Motor neuron (in vitro differentiated cells): ENCODE measurements at regions of chr2 and their contacts with region 1.

Region 1: GRCh38 chr2:130873700-130874346 is 37.1 kb downstream of the ARHGEF4 start:
- ATAC-seq: peak; percentile 14 to 93 (median 44)
- H3K4me3 ChIP-seq: no peak overlapping the region
- H3K27ac ChIP-seq: no peak overlapping the region
- H3K4me1 ChIP-seq: peaks cover 20 to 30% of the 10 kb centered on the region in 2 donors

Region 2: GRCh38 chr2:129945537-129945936 is 928.3 kb before region 1 on chr2:
- in situ Hi-C with region 1: no loop called
- ATAC-seq: no peak
- H3K4me3 ChIP-seq: no peak overlapping the region
- H3K27ac ChIP-seq: no peak overlapping the region
- H3K4me1 ChIP-seq: no peaks in the 10 kb centered on the region

Region 3: GRCh38 chr2:130807659-130808385 is 66.0 kb before region 1 on chr2:
- in situ Hi-C with region 1: loop called in 1 of 9 experiments (anchors 10 kb)
- ATAC-seq: peak; percentile 79 to 94 (median 89)
- H3K4me3 ChIP-seq: no peak overlapping the region
- H3K27ac ChIP-seq: no peak overlapping the region
- H3K4me1 ChIP-seq: peaks cover 0 to 8% of the 10 kb centered on the region in 2 donors

Region 4: DNA sequence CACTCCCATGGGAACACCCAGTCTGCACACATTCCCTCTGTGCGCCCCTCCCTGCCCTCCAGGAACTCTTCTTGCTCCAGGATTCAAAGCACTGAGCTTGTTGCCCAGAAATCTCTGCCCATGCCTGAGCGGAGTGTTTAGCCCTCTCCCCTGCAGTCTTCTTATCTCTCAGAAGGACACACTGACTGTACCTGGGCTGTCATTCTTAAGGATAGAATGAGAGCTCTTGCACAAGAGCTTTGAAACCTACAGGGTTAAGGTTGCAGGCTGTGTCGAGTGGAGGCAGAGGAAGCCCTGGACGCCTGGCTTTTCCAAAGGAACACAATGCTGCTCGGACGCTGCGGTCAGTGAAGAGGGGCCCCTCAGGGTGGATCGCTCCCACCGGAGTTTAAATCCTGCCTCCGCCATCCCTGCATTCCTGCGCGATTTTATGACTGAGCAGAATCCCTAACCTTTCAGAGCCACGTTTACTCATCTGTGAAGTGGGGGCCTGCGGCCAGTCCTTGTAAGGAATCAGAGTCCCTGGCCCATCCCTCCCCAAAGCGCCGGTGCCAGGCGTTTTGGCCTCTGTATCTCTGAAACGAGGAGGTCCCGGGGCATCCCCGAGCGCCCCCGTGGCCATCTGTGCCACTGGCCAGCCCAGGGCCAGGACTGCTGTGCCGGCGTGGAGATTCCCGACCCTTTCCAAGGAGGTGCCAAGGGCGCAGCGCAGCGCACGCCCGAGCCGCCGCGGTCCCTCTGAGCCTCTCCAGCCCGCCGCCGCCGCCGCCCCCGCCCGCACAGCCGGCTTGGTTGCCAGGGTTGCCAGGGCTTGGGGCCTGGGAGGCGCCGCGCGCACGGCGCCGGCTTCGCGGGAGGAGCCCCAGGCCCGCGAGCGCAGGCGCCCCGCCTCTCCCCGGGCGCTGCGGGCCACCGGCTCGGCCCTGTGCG is 160.6 kb after region 1 on chr2:
- in situ Hi-C with region 1: no loop called
- ATAC-seq: peak; percentile 66 to 88 (median 81)
- H3K4me3 ChIP-seq: peak overlapping the region; percentile 36 to 51 (median 43)
- H3K27ac ChIP-seq: no peak overlapping the region
- H3K4me1 ChIP-seq: peaks cover 11 to 16% of the 10 kb centered on the region in 2 donors